A549 (cell line): ENCODE measurements at regions of chr11 and their contacts with region 1.

Region 1: GRCh38 chr11:13384908-13385640 is 77.9 kb downstream of the BTBD10 start:
- DNase-seq: peak; percentile 46 to 52
- ATAC-seq: peak; percentile 68 to 82; a peak in 5 of 6 replicates
- H3K4me3 ChIP-seq: no peak overlapping the region
- H3K27ac ChIP-seq: no peak overlapping the region
- H3K4me1 ChIP-seq: no peaks in the 10 kb centered on the region
- CTCF ChIP-seq: peak; percentile 82
- EP300 ChIP-seq: no peak
- POLR2A ChIP-seq: no peak
- RAD21 ChIP-seq: peak; percentile 67 to 69

Region 2: DNA sequence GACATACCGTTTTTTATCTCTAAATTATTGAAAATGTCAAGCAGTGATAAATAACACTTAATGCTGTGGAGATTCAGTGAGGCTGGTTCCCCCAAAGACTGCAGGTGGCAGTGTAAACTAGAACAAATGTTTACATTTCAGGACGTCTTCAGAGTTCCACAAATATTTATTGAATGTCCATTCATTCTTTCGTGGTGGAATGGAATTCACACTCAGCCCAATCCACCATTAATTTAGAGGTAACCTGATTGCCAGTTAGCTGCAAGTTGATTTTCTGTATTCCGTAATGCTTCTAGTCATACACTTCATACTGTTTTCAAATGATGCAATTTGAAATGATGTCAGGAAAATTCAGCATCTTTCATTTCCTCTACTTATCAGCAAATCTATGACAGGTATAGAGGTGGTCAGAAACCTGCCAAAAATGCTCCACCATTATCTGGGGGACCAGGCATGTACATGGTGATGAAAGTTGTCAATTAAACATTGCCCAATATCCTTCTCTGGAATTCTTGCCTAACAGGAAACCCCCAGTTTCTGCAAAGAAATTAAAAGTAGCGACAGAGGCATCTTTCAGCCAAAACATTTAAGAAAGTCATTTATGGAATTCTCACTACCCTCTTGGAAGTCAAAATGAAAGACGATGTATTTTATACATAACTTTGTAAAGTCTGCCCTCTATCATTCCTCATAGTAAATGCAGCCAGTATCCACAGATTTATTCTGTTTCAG is 201.8 kb before region 1 on chr11:
- CTCF ChIA-PET with region 1: interaction called, 10 read pairs
- POLR2A ChIA-PET with region 1: no interaction called
- DNase-seq: peak; percentile 48 to 53
- ATAC-seq: peak; percentile 85 to 92
- H3K4me3 ChIP-seq: peak overlapping the region; percentile 42
- H3K27ac ChIP-seq: peak overlapping the region; percentile 54 to 69; a peak in 5 of 6 replicates
- H3K4me1 ChIP-seq: peaks cover 6% of the 10 kb centered on the region
- CTCF ChIP-seq: peak; percentile 60
- EP300 ChIP-seq: no peak
- POLR2A ChIP-seq: no peak
- RAD21 ChIP-seq: peak; percentile 76 to 80

Region 3: GRCh38 chr11:13367115-13367514 is 18.0 kb before region 1 on chr11:
- CTCF ChIA-PET with region 1: interaction called, 21 read pairs
- POLR2A ChIA-PET with region 1: no interaction called
- DNase-seq: peak in 1 of 2 experiments; percentile 8
- ATAC-seq: peak; percentile 54 to 58; a peak in 3 of 6 replicates
- H3K4me3 ChIP-seq: no peak overlapping the region
- H3K27ac ChIP-seq: no peak overlapping the region
- H3K4me1 ChIP-seq: peaks cover 6% of the 10 kb centered on the region; the same call in 1 of the 3 replicates
- CTCF ChIP-seq: no peak
- EP300 ChIP-seq: no peak
- POLR2A ChIP-seq: no peak
- RAD21 ChIP-seq: no peak

Region 4: DNA sequence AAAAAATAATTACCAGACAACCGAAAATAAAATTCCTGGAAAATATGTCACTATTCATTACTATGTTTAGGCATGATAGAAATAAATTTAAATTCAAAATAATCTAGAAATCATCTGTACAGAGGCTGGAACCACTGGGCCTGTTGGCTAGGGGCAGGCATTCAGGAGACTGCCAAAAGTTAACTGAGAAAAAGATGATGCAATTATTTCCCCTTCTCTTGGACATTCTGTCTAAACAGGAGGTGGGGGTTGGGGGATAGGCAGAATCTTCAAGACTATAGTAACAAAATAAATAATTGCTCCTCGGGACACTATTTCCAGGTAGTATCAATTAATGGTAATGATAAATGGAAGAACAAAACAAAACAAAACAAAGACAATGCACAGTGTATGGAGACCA is 63.8 kb after region 1 on chr11:
- CTCF ChIA-PET with region 1: no interaction called
- POLR2A ChIA-PET with region 1: no interaction called
- DNase-seq: no peak
- ATAC-seq: no peak
- H3K4me3 ChIP-seq: no peak overlapping the region
- H3K27ac ChIP-seq: 0 out of 6 replicates have a peak overlapping the region, but pooled peaks of 1 of the 2 experiments have one; percentile 1
- H3K4me1 ChIP-seq: peaks cover 21% of the 10 kb centered on the region
- CTCF ChIP-seq: no peak
- EP300 ChIP-seq: no peak
- POLR2A ChIP-seq: no peak
- RAD21 ChIP-seq: no peak